ENCODE measurements at regions of chr10 and their contacts with region 1.

Region 1: DNA sequence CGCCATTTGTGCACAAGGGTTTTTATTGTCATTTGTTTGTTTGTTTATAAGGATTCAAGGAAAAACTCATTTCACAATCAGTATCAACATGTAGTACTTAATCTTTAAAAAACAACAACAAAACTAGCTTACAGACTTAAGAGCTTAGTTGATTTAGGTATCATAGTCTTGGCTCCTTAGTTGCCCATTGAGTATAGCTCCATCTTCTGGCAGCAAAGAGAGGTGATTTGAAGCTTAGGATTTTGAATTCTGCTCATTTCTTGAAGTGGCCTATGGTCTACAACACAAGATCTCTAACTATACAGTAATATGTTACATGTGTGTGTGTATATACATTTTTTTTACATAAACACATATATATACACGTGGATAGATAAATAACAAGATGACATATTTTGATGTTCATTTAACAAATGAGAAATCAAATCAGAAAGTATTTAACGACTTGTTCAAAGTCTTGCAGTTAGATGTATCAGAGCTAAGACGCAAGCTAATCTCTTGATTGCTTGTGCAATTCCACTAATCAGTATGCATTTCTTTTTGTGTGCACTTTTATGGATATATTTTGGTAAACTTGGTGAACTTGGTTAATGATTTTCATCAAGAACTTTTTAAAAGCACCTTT is 307.3 kb downstream of the CAMK1D start:
- DNase-seq: no peak
- ATAC-seq: peak; percentile 52
- H3K4me3 Mint-ChIP-seq: no peak overlapping the region
- H3K27ac Mint-ChIP-seq: no peak overlapping the region
- H3K4me1 Mint-ChIP-seq: no peaks in the 10 kb centered on the region
- H3K27me3 Mint-ChIP-seq: no peaks in the 10 kb centered on the region
- CTCF ChIP-seq: peak; percentile 47; the same call in 1 of the 2 replicates

Region 2: DNA sequence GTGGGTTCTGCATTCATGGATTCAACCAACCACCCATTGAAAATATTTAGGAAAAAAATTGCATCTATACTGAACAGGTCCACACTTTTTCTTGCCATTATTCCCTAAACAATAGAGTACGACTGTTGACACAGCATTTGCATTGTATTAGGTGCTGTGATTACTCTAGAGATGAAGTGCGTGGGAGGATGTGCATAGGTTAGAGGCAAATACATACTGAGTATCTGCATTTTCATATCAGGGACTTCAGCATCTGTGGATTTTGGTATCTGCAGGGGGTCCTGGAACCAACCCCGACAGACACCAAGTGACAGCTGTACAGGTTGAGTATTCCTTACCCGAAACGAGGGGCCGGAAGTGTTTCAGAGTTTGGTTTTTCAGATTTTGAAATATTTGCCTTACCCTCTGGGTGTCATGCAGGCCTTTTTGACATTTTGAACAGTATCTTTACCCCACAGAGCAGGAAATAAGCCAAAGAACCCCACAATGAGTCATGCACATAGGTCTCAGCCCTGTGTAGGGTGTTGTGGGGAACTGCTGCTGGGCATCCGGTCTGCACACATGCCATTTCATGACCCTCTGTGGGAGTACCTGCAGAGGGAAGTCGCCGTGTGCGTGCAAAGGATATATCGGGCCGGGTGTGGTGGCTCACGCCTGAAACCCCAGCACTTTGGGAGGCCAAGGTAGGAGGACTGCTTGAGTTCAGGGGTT is 475.4 kb before region 1 on chr10:
- CTCF ChIA-PET with region 1: no interaction called
- POLR2A ChIA-PET with region 1: no interaction called
- DNase-seq: no peak
- ATAC-seq: no peak
- H3K4me3 Mint-ChIP-seq: no peak overlapping the region
- H3K27ac Mint-ChIP-seq: peak overlapping the region; percentile 96; the same call in 1 of the 2 replicates
- H3K4me1 Mint-ChIP-seq: peaks cover 21% of the 10 kb centered on the region
- H3K27me3 Mint-ChIP-seq: no peaks in the 10 kb centered on the region
- CTCF ChIP-seq: no peak

Region 3: GRCh38 chr10:12638103-12638502 is 18.5 kb before region 1 on chr10:
- CTCF ChIA-PET with region 1: interaction called, 23 read pairs
- POLR2A ChIA-PET with region 1: no interaction called
- DNase-seq: no peak
- ATAC-seq: peak; percentile 31
- H3K4me3 Mint-ChIP-seq: no peak overlapping the region
- H3K27ac Mint-ChIP-seq: no peak overlapping the region
- H3K4me1 Mint-ChIP-seq: peaks cover 25% of the 10 kb centered on the region
- H3K27me3 Mint-ChIP-seq: no peaks in the 10 kb centered on the region
- CTCF ChIP-seq: no peak

Region 4: DNA sequence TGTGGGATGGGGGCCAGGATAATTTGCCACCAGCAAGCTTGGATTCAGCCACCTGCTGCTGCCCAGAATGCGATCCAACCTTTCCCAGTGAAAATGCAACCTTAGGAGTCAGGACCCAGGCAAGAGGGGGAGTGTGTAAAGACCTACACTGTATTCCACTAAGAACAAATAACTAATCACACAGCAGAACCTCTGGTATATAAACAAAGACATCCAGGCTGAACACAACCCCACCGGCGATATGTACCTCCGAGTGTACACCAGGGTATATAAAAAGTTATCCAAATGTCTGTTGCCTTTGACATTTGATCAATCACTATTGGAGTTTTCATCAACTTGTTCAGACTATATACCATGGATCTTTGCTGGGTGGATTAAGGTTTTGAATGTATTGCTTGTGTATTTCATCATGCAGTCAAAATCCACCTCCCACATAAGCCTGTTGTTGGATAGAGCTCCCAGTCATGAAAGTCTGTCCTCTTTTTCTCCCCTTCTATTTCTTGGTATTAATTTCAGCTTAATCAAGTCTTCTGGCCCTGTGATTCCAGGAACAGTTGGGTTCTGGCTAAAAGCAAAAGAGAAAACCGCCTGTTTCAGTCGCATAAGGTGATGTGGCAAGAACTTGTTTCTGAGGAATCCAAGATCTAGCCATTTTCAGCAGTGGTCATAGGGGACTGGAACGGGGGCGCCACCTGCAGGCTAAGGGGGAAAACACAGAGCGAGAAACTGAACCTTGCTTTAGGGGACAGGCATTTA is 54.1 kb after region 1 on chr10:
- CTCF ChIA-PET with region 1: interaction called, 11 read pairs
- POLR2A ChIA-PET with region 1: no interaction called
- DNase-seq: peak; percentile 79
- ATAC-seq: peak; percentile 77
- H3K4me3 Mint-ChIP-seq: no peak overlapping the region
- H3K27ac Mint-ChIP-seq: no peak overlapping the region
- H3K4me1 Mint-ChIP-seq: peaks cover 42% of the 10 kb centered on the region
- H3K27me3 Mint-ChIP-seq: peaks cover 5% of the 10 kb centered on the region
- CTCF ChIP-seq: peak; percentile 73